CD8-positive, alpha-beta T cell (primary cell): ENCODE measurements at regions of chr1 and their contacts with region 1.

Region 1: GRCh38 chr1:172054172-172054571 is 212.9 kb downstream of the DNM3 start:
- DNase-seq: no peak
- ATAC-seq: no peak
- H3K4me3 ChIP-seq: no peak overlapping the region
- H3K4me3 Mint-ChIP-seq: no peak overlapping the region
- H3K27ac ChIP-seq: no peak overlapping the region
- H3K27ac Mint-ChIP-seq: no peak overlapping the region
- H3K4me1 ChIP-seq: no peaks in the 10 kb centered on the region
- H3K4me1 Mint-ChIP-seq: no peaks in the 10 kb centered on the region
- H3K27me3 ChIP-seq: no peaks in the 10 kb centered on the region
- H3K27me3 Mint-ChIP-seq: no peaks in the 10 kb centered on the region
- CTCF ChIP-seq: no peak

Region 2: DNA sequence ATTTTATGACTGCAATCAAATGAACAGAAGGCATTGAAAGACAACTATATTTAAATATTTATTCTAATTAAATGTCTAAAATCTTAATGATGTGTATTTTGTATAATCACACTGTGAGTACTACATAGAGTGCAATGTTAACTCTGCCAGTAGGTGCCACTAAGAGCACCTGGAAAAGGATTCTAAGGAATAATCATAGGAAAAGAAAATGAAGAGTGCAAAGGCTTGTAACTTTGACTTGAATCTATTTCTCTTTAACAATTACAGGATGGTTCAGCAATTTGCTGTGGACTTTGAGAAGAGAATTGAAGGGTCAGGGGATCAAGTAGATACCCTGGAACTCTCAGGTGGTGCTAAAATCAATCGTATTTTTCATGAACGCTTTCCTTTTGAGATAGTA is 12.4 kb before region 1 on chr1:
- CTCF ChIA-PET with region 1: no interaction called
- POLR2A ChIA-PET with region 1: no interaction called
- intact Hi-C with region 1: no loop called
- DNase-seq: no peak
- ATAC-seq: no peak
- H3K4me3 ChIP-seq: no peak overlapping the region
- H3K4me3 Mint-ChIP-seq: no peak overlapping the region
- H3K27ac ChIP-seq: no peak overlapping the region
- H3K27ac Mint-ChIP-seq: no peak overlapping the region
- H3K4me1 ChIP-seq: no peaks in the 10 kb centered on the region
- H3K4me1 Mint-ChIP-seq: peaks cover 14% of the 10 kb centered on the region
- H3K27me3 ChIP-seq: no peaks in the 10 kb centered on the region
- H3K27me3 Mint-ChIP-seq: no peaks in the 10 kb centered on the region
- CTCF ChIP-seq: no peak

Region 3: GRCh38 chr1:172069534-172069933 is 15.4 kb after region 1 on chr1:
- CTCF ChIA-PET with region 1: no interaction called
- POLR2A ChIA-PET with region 1: no interaction called
- intact Hi-C with region 1: loop called in 1 of 2 experiments (anchors 1 kb)
- DNase-seq: no peak
- ATAC-seq: no peak
- H3K4me3 ChIP-seq: no peak overlapping the region
- H3K4me3 Mint-ChIP-seq: no peak overlapping the region
- H3K27ac ChIP-seq: no peak overlapping the region
- H3K27ac Mint-ChIP-seq: no peak overlapping the region
- H3K4me1 ChIP-seq: no peaks in the 10 kb centered on the region
- H3K4me1 Mint-ChIP-seq: no peaks in the 10 kb centered on the region
- H3K27me3 ChIP-seq: no peaks in the 10 kb centered on the region
- H3K27me3 Mint-ChIP-seq: no peaks in the 10 kb centered on the region
- CTCF ChIP-seq: no peak